ENCODE measurements at regions of chr1 and their contacts with region 1.

Region 1: GRCh38 chr1:112369392-112370285 is 26.4 kb upstream of the CTTNBP2NL start:
- DNase-seq: peak; percentile 73
- H3K4me3 ChIP-seq: no peak overlapping the region
- H3K27ac ChIP-seq: no peak overlapping the region
- H3K4me1 ChIP-seq: no peaks in the 10 kb centered on the region
- H3K27me3 ChIP-seq: no peaks in the 10 kb centered on the region
- CTCF ChIP-seq: peak; percentile 97 to 99

Region 2: GRCh38 chr1:111789666-111790316 is 579.8 kb before region 1 on chr1:
- CTCF ChIA-PET with region 1: no interaction called
- dilution Hi-C with region 1: no loop called
- in situ Hi-C with region 1: no loop called
- intact Hi-C with region 1: loop called (anchors 2 kb)
- DNase-seq: no peak
- H3K4me3 ChIP-seq: no peak overlapping the region
- H3K27ac ChIP-seq: no peak overlapping the region
- H3K4me1 ChIP-seq: no peaks in the 10 kb centered on the region
- H3K27me3 ChIP-seq: no peaks in the 10 kb centered on the region
- CTCF ChIP-seq: peak in 1 of 2 donors; percentile 29

Region 3: DNA sequence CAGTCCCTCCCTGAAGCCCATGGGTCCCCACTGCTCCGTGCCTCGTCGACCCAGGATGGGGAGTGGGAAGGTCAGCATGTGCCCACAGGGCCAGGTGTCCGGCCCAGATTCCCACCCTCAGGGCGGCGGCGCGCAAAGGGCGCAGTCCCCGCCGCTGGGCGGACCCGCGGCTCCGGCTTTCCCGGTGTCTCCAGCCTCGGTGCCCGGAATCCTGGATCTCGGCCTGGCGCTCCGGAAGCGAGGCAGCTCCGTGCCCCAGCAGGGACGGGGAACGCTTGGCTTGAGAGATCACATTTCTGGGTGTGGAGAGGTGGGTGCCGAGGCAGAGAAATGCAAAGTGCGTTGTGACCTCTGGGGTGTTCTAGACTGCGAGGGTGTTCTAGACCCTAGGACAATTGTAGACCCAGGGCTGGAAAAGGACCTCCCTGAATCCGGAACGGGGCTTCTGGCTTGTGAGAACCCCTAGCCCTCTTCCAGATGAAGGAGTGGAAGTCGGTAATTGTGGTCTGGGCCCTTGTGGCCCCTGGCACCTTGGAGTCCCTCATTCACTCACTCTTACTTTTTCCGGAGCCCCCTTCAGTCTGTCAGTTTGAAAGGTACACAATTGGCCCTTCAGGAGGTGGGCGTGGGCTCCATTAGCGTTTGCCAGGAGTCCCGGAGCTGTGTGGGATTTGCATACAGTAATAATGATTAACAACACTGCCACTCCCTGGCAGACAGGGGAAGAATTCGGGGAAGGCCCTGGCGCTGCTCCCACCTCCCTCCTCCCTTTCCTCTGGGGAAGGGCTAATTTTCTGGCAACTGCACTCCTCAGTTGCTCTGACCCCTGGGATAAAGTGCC is 378.5 kb before region 1 on chr1:
- CTCF ChIA-PET with region 1: no interaction called
- dilution Hi-C with region 1: no loop called
- in situ Hi-C with region 1: no loop called
- intact Hi-C with region 1: loop called (anchors 10 kb)
- DNase-seq: peak; percentile 57
- H3K4me3 ChIP-seq: peak overlapping the region; percentile 32 to 52 (median 48)
- H3K27ac ChIP-seq: no peak overlapping the region
- H3K4me1 ChIP-seq: peaks cover 18% of the 10 kb centered on the region
- H3K27me3 ChIP-seq: peaks cover 5% of the 10 kb centered on the region
- CTCF ChIP-seq: peak; percentile 43 to 60

Region 4: DNA sequence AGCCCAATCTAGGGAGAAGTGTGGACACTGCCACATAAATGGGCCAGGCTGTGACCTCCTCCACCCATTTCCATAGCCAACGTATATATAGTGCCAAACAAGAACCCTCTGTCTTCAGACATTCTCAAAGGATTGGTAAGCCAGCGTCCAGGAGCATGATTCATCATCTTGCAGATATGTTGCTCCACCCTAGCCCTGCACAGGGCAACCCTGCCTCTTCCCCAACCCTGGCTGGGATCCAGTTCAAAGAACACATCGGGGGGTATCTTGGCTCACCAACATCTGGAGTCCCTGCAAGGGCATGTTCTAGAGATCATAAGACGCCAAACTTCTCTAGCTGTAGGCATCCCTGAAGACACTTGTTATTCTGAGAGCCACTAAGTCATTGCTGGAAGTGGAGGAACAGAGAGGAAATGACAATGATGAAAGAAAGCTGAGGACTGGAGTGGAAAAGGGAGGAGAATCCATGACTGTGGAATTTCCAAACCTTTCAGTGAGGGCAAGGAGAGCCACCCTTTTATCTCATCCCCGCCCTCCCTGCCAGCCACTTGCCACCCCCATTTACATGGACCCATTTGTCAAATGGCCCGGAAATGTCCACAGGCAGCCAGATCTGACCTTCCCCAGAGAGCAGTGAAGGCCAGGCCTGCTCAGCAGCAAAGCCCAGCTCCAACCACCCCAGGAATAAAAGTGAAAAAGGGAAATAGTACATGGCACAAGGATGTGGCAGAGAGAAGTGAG is 117.7 kb before region 1 on chr1:
- CTCF ChIA-PET with region 1: no interaction called
- dilution Hi-C with region 1: no loop called
- in situ Hi-C with region 1: loop called in 1 of 2 experiments (anchors 25 kb)
- intact Hi-C with region 1: no loop called
- DNase-seq: peak; percentile 88
- H3K4me3 ChIP-seq: no peak overlapping the region
- H3K27ac ChIP-seq: peak overlapping the region; percentile 84
- H3K4me1 ChIP-seq: peaks cover 18% of the 10 kb centered on the region
- H3K27me3 ChIP-seq: no peaks in the 10 kb centered on the region
- CTCF ChIP-seq: no peak

Region 5: DNA sequence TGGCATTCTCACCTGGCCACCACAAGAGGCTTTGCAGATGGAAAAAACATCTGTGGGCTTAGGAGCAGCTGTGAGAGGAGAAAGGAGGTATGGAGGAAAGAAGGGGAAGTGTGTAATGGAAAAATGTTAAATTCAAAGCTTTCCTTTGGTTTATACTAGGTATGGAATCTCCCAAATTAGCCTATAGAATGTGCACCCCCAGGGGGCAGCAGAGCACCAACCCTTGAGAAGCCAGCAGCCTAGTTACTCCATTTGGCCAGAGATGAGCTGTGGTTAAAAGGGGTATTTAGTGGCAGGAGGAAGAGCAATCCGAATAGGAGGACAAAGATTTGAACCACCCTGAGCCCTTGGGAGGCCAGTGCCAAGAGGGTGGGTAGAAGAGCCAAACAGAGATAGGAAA is 71.1 kb before region 1 on chr1:
- CTCF ChIA-PET with region 1: interaction called, 9 read pairs
- dilution Hi-C with region 1: loop called (anchors 5 kb)
- in situ Hi-C with region 1: loop called in 1 of 2 experiments (anchors 10 kb)
- intact Hi-C with region 1: loop called (anchors 1 kb)
- DNase-seq: peak; percentile 58
- H3K4me3 ChIP-seq: no peak overlapping the region
- H3K27ac ChIP-seq: no peak overlapping the region
- H3K4me1 ChIP-seq: peaks cover 10% of the 10 kb centered on the region
- H3K27me3 ChIP-seq: no peaks in the 10 kb centered on the region
- CTCF ChIP-seq: peak; percentile 86 to 89

Region 6: DNA sequence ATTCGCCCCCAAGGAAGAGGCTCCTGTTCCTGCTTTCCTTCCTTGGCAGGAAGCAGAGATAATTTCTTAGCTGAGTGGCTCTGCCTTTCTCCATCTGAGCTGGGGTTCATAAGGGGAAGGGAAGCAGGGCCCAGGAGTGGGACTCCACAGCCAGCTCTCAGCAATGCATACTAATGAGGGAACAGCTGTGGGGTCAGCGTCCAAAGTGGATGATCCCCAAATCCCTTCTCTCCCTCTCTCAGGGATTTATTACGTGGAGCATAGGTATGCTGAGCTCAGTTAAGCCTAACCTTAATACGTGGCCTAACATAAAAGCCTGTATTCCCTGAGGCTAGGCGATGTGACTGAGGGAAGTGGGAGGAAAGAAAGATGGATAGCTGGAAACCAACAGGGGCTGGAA is 60.9 kb before region 1 on chr1:
- CTCF ChIA-PET with region 1: no interaction called
- dilution Hi-C with region 1: no loop called
- in situ Hi-C with region 1: loop called in 1 of 2 experiments (anchors 10 kb)
- intact Hi-C with region 1: no loop called
- DNase-seq: no peak
- H3K4me3 ChIP-seq: no peak overlapping the region
- H3K27ac ChIP-seq: no peak overlapping the region
- H3K4me1 ChIP-seq: no peaks in the 10 kb centered on the region
- H3K27me3 ChIP-seq: peaks cover 2% of the 10 kb centered on the region
- CTCF ChIP-seq: no peak

Region 7: DNA sequence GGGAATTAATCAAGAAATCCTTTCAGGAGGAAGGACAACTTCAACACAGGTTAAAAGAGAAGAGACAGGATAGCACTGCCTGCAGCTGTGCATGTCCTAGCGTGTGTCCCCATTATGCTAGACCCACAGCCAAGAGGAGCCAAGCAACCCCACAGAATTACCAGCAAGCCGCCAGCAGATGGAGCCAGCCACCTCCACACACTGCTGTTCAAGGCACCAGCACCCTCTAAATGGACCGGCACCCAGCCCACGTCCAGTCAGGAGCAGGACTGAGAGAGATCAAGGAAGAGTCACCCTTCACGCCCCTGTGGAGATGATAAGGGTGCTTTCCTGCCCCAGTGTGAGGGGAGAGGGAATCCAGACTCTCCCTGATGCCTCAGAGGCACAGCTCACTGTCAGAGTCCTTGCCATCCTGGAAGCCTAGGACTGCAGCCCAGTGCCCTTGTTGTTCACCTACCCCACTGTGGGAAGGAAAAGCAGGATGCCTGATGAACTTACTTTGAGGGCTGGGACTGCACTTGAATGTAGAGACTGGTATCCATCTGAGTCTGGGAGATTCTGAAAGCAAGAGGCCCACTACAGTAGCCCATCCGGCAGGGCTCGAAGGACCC is 10.7 kb before region 1 on chr1:
- CTCF ChIA-PET with region 1: interaction called, 7 read pairs
- dilution Hi-C with region 1: no loop called
- in situ Hi-C with region 1: no loop called
- intact Hi-C with region 1: loop called (anchors 1 kb)
- DNase-seq: peak; percentile 59
- H3K4me3 ChIP-seq: no peak overlapping the region
- H3K27ac ChIP-seq: no peak overlapping the region
- H3K4me1 ChIP-seq: peaks cover 21% of the 10 kb centered on the region
- H3K27me3 ChIP-seq: no peaks in the 10 kb centered on the region
- CTCF ChIP-seq: peak; percentile 87 to 92